Dendritic cell treated with granulocyte-macrophage colony-stimulating factor and Interleukin-4, amounts not matched to agents 40 ng/mL and 50 ng/mL, for 4 days (primary cell): ENCODE measurements at regions of chr15 and their contacts with region 1.

Region 1: DNA sequence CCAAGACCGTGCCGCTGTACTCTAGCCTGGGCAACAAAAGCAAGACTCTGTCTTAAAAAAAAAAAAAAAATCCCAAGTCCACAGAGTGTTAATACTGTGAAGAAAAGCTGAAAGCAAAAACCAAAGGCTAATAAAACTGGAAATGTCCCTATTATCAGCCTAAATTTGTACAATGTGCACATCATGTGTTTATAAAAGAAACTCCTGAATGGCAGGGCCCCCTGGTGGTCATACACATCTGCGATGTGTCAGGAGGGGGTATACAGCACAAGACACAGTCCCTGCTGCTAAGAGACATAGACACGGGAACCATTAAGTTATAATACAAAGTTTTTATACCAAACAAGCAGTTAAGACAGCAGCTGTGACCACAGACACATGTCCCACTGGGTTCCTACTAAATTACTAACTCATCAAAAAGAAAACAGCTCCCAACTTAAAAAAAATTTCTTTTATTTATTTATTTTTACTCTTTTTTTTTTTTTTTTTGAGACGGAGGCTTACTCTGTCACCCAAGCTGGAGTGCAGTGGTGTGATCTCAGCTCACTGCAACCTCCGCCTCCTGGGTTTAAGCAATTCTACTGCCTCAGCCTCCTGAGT is 31.0 kb downstream of the IDH2 start:
- H3K4me3 Mint-ChIP-seq: peak overlapping the region; percentile 13
- H3K27ac Mint-ChIP-seq: peak overlapping the region; percentile 76
- H3K4me1 Mint-ChIP-seq: peaks cover 41% of the 10 kb centered on the region
- H3K27me3 Mint-ChIP-seq: no peaks in the 10 kb centered on the region

Region 2: DNA sequence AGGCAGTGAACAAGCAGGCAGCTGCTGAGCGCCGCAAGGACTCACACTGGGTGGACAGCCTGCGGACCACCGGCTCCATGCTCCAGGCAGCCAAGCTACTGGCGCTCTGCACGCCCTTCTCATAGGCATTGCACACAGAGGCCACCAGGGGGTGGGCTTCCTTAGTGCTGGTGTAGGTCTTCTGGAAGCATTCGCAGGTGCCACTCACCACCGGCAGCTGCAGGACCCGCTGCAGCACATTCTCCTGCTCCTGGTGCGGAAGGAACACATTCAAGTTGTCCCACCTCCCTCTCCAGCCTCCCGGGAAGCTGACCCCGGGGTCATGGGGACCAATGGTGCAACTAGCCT is 398.2 kb before region 1 on chr15:
- intact Hi-C with region 1: no loop called
- H3K4me3 Mint-ChIP-seq: no peak overlapping the region
- H3K27ac Mint-ChIP-seq: no peak overlapping the region
- H3K4me1 Mint-ChIP-seq: no peaks in the 10 kb centered on the region
- H3K27me3 Mint-ChIP-seq: peaks cover 2% of the 10 kb centered on the region

Region 3: DNA sequence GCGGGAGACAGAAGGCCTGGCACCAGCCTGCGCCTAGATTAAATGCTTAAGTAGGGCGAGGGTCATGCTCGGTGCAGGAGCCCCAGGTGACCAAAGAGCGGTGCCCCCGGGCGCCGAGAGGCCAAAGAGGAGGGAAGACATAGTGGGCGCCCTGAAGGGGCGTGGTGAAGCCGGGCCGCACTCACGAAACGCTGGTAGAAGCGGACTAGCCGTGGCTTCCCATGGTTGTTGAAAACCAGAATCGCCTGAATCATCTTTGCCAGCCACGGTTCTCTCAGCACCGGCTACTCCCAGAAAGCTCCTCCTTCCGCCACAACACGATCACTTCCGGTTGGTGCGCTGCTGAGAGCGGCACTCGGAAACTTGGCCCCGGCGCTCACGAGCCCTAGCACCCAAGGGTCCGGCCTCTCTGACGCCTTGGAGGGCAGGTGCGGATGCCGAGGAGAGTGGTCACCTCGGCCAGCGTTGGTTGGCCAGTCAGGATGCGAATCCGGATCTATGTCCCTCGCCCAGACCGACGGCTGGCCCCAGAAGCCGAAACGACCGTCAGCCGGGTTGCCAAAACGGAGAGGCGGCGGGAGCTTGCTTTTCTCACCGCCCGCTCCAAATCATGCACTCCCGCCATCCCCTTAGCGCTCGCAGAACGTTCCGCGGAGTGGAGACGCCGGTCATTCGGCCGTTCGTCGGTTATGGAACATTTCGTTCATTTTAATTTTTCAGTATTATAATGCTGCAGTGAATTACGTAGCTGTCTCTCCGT is 177.4 kb before region 1 on chr15 and contains the start of gene AP3S2:
- intact Hi-C with region 1: loop called (anchors 5 kb)
- H3K4me3 Mint-ChIP-seq: peak within 1 kb of the TSS; percentile 95
- H3K27ac Mint-ChIP-seq: peak within 1 kb of the TSS; percentile 98
- H3K4me1 Mint-ChIP-seq: peaks cover 30% of the 10 kb centered on the region
- H3K27me3 Mint-ChIP-seq: no peaks in the 10 kb centered on the region

Region 4: DNA sequence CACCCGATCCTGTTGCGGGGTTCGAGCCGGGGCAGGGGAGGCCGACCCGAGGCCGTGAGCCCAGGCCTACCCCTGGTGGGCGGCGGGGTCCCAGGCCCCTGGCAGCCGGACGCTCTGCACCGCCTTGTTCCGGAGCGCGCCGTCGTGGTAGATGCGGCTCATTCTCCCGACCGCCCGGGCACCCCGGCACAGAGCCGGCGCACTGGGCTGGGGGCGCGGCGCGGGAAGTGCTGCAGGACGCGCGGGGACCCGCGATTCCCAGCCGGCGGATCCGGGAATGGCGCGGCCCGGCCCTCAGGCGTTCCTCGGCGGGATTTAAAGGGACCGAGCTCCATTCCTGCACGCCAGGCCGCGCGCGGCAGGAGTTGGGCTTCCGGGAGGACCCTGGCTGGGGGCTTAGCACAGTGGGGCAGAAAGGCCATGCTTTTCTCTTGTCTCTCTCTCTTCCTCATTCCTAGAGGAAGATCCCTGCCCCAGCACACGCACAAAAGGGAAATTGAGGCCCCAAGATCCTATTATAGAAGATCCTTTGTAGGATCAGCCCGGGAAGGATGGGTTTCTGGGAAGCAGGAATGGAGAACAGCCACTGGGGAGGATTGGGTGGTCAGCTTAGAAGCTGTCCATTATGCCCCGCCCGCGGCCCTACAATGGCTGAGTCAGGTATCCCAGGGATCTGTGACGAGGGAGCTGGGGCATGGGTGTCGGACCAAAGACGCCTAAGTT is 158.5 kb before region 1 on chr15 and contains the start of gene ARPIN:
- intact Hi-C with region 1: loop called (anchors 5 kb)
- H3K4me3 Mint-ChIP-seq: peak within 1 kb of the TSS; percentile 87
- H3K27ac Mint-ChIP-seq: peak within 1 kb of the TSS; percentile 87
- H3K4me1 Mint-ChIP-seq: peaks cover 51% of the 10 kb centered on the region
- H3K27me3 Mint-ChIP-seq: peaks cover 2% of the 10 kb centered on the region

Region 5: GRCh38 chr15:90037961-90038631 is 33.2 kb before region 1 on chr15:
- intact Hi-C with region 1: loop called (anchors 5 kb)
- H3K4me3 Mint-ChIP-seq: no peak overlapping the region
- H3K27ac Mint-ChIP-seq: peak overlapping the region; percentile 88
- H3K4me1 Mint-ChIP-seq: peaks cover 95% of the 10 kb centered on the region
- H3K27me3 Mint-ChIP-seq: no peaks in the 10 kb centered on the region

Region 6: DNA sequence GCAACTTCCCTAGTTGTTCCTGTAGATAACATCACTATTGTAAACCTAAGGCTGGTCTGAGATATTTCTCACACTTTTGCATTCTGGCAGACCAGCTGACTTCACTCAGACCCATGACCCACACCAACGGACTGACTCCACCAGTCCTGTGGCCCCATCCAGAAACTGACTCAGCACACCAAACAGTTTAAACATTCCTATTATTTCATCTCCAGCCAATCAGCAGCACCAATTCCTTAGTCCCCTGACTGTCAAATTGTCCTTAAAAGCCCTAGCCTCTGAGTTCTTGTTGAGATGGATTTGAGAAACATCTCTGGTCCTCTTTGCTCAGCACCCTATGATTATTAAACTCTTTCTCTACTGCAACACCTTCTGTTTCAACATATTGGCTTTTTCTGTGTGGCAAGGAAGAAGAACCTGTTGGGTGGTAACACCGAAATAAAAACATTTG is 43.2 kb after region 1 on chr15:
- intact Hi-C with region 1: no loop called
- H3K4me3 Mint-ChIP-seq: no peak overlapping the region
- H3K27ac Mint-ChIP-seq: no peak overlapping the region
- H3K4me1 Mint-ChIP-seq: no peaks in the 10 kb centered on the region
- H3K27me3 Mint-ChIP-seq: peaks cover 7% of the 10 kb centered on the region